ENCODE measurements at regions of chr11 and their contacts with region 1.

Region 1: DNA sequence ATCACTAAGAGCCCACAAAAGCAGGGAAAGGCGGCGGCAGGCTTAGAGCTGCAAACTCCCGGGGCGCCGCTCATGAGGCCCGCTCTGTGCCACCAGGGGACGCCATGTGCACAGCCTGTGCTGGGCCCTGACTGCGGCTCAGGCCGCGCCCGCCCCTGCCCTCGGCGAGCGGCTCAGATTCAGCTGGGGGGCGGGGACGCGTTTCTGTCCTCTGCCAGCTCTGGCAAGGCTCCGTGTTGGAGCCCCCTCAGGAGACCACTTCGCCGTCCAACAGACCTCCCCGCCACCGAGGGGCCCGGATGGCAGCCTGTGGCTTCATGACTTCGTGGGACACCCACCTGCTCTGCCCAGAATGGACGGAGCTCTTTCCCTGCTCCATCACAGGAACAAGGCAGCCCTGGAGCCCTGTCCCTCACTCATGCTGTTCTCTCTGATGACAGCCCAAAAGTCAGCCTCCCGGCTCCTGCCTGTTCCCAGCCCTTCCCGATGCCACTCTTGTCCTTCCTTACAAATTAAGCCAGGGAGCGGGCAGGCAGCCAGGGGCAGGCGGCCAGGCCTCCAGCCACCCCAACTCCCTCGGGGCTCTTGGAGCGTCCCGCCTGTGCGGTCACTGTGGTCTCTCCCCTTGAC is 69.1 kb downstream of the NAT10 start:
- DNase-seq: peak; percentile 95
- H3K4me3 ChIP-seq: peak overlapping the region in 5 of 8 donors; percentile 10 to 55 (median 25)
- H3K27ac ChIP-seq: no peak overlapping the region
- H3K4me1 ChIP-seq: peaks cover 0 to 21% (median 12%) of the 10 kb centered on the region in 6 donors
- H3K27me3 ChIP-seq: peaks cover 0 to 16% (median 0%) of the 10 kb centered on the region in 7 donors
- CTCF ChIP-seq: peak; percentile 67 to 89 (median 84)
- POLR2A ChIP-seq: no peak

Region 2: GRCh38 chr11:34357701-34358257 is 183.3 kb after region 1 on chr11 and contains the start of gene ABTB2:
- intact Hi-C with region 1: loop called (anchors 2 kb)
- DNase-seq: peak; percentile 99
- H3K4me3 ChIP-seq: peak within 1 kb of the TSS; percentile 49 to 78 (median 66)
- H3K27ac ChIP-seq: peak within 1 kb of the TSS in 7 of 8 donors; percentile 19 to 80 (median 74)
- H3K4me1 ChIP-seq: peaks cover 14 to 48% (median 35%) of the 10 kb centered on the region in 6 donors
- H3K27me3 ChIP-seq: peaks cover 0 to 52% (median 23%) of the 10 kb centered on the region in 7 donors
- CTCF ChIP-seq: peak in 2 of 11 experiments; percentile 20 to 23
- POLR2A ChIP-seq: peak in 2 of 3 donors; percentile 76 to 84
- total RNA-seq, gene ABTB2: 1.5 to 2.9 (median 2.0) TPM

Region 3: GRCh38 chr11:34487430-34487829 is 312.9 kb after region 1 on chr11:
- intact Hi-C with region 1: loop called (anchors 5 kb)
- DNase-seq: no peak
- H3K4me3 ChIP-seq: no peak overlapping the region
- H3K27ac ChIP-seq: no peak overlapping the region
- H3K4me1 ChIP-seq: no peaks in the 10 kb centered on the region
- H3K27me3 ChIP-seq: no peaks in the 10 kb centered on the region
- CTCF ChIP-seq: no peak
- POLR2A ChIP-seq: no peak

Measured in spleen (tissue), 13 donors.